B cell (primary cell): ENCODE measurements at regions of chr14 and their contacts with region 1.

Region 1: GRCh38 chr14:89720741-89721315 is 233.7 kb downstream of the EFCAB11 start:
- DNase-seq: peak; percentile 91
- ATAC-seq: peak; percentile 93
- H3K4me3 ChIP-seq: peak overlapping the region in 2 of 5 experiments; percentile 26 to 40
- H3K4me3 Mint-ChIP-seq: peak overlapping the region; percentile 75
- H3K27ac ChIP-seq: peak overlapping the region; percentile 93 to 95
- H3K27ac Mint-ChIP-seq: peak overlapping the region; percentile 95
- H3K4me1 ChIP-seq: peaks cover 59 to 62% of the 10 kb centered on the region in 2 donors
- H3K4me1 Mint-ChIP-seq: peaks cover 62% of the 10 kb centered on the region
- H3K27me3 ChIP-seq: no peaks in the 10 kb centered on the region
- H3K27me3 Mint-ChIP-seq: no peaks in the 10 kb centered on the region
- CTCF ChIP-seq: no peak

Region 2: DNA sequence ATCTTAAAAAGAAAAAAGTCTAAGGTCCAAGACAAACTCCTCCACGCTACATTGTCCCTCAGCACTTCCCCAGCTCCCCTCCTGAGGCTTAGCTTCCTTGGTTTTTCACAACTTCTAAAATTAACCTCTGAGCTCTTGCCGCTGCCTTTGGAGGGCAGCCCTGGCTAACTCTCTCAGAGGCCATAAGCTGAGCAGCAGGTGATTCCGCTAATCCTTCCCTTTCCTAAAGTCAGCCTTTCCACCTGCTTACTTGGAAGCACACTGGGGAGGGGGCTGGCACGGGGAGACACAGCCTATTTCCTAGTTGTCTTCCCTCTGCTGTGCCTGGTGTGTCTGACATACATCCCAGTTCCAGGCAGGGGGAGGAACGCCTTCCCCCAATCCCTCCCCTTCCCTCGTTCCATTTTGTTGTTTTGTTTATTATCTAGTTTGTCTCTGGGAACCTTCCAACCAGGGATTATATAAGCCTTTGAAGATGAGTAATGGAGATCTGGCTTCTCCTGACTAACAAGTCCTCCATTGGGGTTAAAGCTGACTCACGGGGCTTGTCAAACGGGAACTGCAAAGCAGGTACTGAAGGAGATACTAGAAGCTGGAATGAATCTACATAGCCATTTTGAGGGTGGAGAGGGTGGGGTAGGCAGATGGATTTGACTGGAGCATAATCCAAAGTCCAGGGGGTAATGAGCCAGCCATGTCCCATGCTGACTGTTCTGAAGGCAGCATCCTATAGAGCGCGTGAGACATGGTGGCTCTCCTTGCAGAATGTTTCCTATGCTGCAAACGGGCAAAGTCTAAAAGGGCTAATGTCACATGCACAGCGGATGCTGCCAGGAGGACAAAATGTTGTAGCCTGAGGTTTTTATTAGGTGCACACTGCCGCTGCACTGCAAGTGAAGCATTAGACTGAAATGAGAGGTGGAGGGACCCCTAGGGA is 534.6 kb before region 1 on chr14:
- CTCF ChIA-PET with region 1: no interaction called
- POLR2A ChIA-PET with region 1: no interaction called
- intact Hi-C with region 1: loop called (anchors 2 kb)
- DNase-seq: no peak
- ATAC-seq: no peak
- H3K4me3 ChIP-seq: peak overlapping the region in 1 of 5 experiments; percentile 11
- H3K4me3 Mint-ChIP-seq: peak overlapping the region; percentile 79
- H3K27ac ChIP-seq: peak overlapping the region in 1 of 2 donors; percentile 64
- H3K27ac Mint-ChIP-seq: peak overlapping the region; percentile 94
- H3K4me1 ChIP-seq: peaks cover 21 to 24% of the 10 kb centered on the region in 2 donors
- H3K4me1 Mint-ChIP-seq: peaks cover 41% of the 10 kb centered on the region
- H3K27me3 ChIP-seq: no peaks in the 10 kb centered on the region
- H3K27me3 Mint-ChIP-seq: no peaks in the 10 kb centered on the region
- CTCF ChIP-seq: no peak

Region 3: DNA sequence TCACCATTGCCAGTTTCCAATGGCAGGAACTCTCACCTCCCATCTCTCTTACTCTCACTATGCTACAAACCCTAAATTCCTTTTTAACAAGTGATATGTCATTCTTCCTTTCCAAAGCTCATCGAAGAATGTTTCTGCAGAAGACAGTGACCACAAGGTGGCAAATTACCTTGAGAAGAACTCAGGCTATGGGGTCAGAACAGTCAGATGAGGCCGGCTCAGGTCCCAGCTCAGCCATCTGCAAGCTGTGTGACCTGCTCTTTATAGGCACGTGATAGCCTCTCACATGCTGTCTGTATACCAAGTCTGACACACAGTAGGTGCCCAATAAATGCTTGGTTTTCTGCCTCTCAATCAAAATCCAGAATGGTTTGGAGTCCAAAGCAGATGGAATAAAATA is 384.5 kb before region 1 on chr14:
- CTCF ChIA-PET with region 1: interaction called, 5 read pairs
- POLR2A ChIA-PET with region 1: no interaction called
- intact Hi-C with region 1: loop called (anchors 1 kb)
- DNase-seq: peak; percentile 69
- ATAC-seq: peak; percentile 69
- H3K4me3 ChIP-seq: no peak overlapping the region
- H3K4me3 Mint-ChIP-seq: no peak overlapping the region
- H3K27ac ChIP-seq: peak overlapping the region in 1 of 2 donors; percentile 31
- H3K27ac Mint-ChIP-seq: peak overlapping the region; percentile 62
- H3K4me1 ChIP-seq: peaks cover 39 to 42% of the 10 kb centered on the region in 2 donors
- H3K4me1 Mint-ChIP-seq: peaks cover 67% of the 10 kb centered on the region
- H3K27me3 ChIP-seq: no peaks in the 10 kb centered on the region
- H3K27me3 Mint-ChIP-seq: no peaks in the 10 kb centered on the region
- CTCF ChIP-seq: peak; percentile 52

Region 4: GRCh38 chr14:89618811-89619551 is 101.8 kb before region 1 on chr14:
- CTCF ChIA-PET with region 1: interaction called, 5 read pairs
- POLR2A ChIA-PET with region 1: interaction called, 6 read pairs
- intact Hi-C with region 1: loop called (anchors 1 kb)
- DNase-seq: peak; percentile 81
- ATAC-seq: peak; percentile 72
- H3K4me3 ChIP-seq: peak overlapping the region; percentile 61 to 93 (median 86)
- H3K4me3 Mint-ChIP-seq: peak overlapping the region; percentile 92
- H3K27ac ChIP-seq: peak overlapping the region in 1 of 2 donors; percentile 71
- H3K27ac Mint-ChIP-seq: peak overlapping the region; percentile 86
- H3K4me1 ChIP-seq: peaks cover 51 to 55% of the 10 kb centered on the region in 2 donors
- H3K4me1 Mint-ChIP-seq: peaks cover 66% of the 10 kb centered on the region
- H3K27me3 ChIP-seq: no peaks in the 10 kb centered on the region
- H3K27me3 Mint-ChIP-seq: no peaks in the 10 kb centered on the region
- CTCF ChIP-seq: no peak

Region 5: DNA sequence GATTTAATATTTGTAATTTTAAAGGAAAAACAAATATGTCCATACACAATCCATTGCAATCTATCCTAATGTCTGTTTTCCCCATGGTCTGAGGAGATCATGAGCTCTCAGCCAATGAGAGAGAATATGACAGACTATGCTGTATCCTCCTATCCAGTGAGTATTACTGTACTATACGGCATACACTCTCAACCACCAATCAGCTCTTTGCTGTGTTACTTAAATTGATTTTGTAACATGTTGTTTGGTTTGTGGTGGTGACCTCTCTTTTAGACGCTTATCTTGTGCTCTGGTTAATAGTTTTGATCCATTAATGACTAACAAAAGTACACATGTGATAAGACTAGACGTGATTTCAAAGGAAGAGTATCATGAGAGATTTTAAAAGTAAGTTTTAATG is 72.3 kb before region 1 on chr14:
- CTCF ChIA-PET with region 1: no interaction called
- POLR2A ChIA-PET with region 1: no interaction called
- intact Hi-C with region 1: no loop called
- DNase-seq: no peak
- ATAC-seq: no peak
- H3K4me3 ChIP-seq: no peak overlapping the region
- H3K4me3 Mint-ChIP-seq: no peak overlapping the region
- H3K27ac ChIP-seq: no peak overlapping the region
- H3K27ac Mint-ChIP-seq: no peak overlapping the region
- H3K4me1 ChIP-seq: peaks cover 0 to 10% of the 10 kb centered on the region in 2 donors
- H3K4me1 Mint-ChIP-seq: peaks cover 18% of the 10 kb centered on the region
- H3K27me3 ChIP-seq: no peaks in the 10 kb centered on the region
- H3K27me3 Mint-ChIP-seq: no peaks in the 10 kb centered on the region
- CTCF ChIP-seq: no peak

Region 6: DNA sequence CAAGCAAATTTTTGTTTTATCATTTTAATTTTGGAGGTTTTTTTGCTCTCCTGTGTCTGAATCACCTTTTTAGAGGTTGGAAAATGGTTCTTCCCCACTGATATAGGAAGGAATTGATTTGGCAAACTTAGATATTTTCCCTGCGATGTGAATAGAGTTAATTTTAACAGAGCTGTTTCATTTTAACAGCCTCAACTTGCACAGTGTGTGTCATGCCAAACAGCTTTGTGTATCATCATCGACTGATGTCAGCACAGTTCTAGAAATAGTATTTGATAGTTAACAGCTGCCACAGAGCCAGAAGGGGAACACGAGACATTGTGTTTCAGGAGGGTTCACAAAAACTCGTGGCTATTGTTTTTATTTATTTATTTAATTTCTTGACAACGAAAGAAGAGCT is 60.7 kb before region 1 on chr14:
- CTCF ChIA-PET with region 1: no interaction called
- POLR2A ChIA-PET with region 1: no interaction called
- intact Hi-C with region 1: no loop called
- DNase-seq: no peak
- ATAC-seq: no peak
- H3K4me3 ChIP-seq: no peak overlapping the region
- H3K4me3 Mint-ChIP-seq: no peak overlapping the region
- H3K27ac ChIP-seq: no peak overlapping the region
- H3K27ac Mint-ChIP-seq: no peak overlapping the region
- H3K4me1 ChIP-seq: no peaks in the 10 kb centered on the region
- H3K4me1 Mint-ChIP-seq: peaks cover 4% of the 10 kb centered on the region
- H3K27me3 ChIP-seq: no peaks in the 10 kb centered on the region
- H3K27me3 Mint-ChIP-seq: no peaks in the 10 kb centered on the region
- CTCF ChIP-seq: no peak

Region 7: GRCh38 chr14:89681086-89682018 is 39.5 kb before region 1 on chr14:
- CTCF ChIA-PET with region 1: no interaction called
- POLR2A ChIA-PET with region 1: no interaction called
- intact Hi-C with region 1: loop called (anchors 5 kb)
- DNase-seq: peak; percentile 41
- ATAC-seq: peak; percentile 51
- H3K4me3 ChIP-seq: peak overlapping the region in 2 of 5 experiments; percentile 18 to 38
- H3K4me3 Mint-ChIP-seq: peak overlapping the region; percentile 62
- H3K27ac ChIP-seq: peak overlapping the region; percentile 45 to 72
- H3K27ac Mint-ChIP-seq: peak overlapping the region; percentile 74
- H3K4me1 ChIP-seq: peaks cover 28 to 30% of the 10 kb centered on the region in 2 donors
- H3K4me1 Mint-ChIP-seq: peaks cover 28% of the 10 kb centered on the region
- H3K27me3 ChIP-seq: no peaks in the 10 kb centered on the region
- H3K27me3 Mint-ChIP-seq: no peaks in the 10 kb centered on the region
- CTCF ChIP-seq: no peak

Region 8: DNA sequence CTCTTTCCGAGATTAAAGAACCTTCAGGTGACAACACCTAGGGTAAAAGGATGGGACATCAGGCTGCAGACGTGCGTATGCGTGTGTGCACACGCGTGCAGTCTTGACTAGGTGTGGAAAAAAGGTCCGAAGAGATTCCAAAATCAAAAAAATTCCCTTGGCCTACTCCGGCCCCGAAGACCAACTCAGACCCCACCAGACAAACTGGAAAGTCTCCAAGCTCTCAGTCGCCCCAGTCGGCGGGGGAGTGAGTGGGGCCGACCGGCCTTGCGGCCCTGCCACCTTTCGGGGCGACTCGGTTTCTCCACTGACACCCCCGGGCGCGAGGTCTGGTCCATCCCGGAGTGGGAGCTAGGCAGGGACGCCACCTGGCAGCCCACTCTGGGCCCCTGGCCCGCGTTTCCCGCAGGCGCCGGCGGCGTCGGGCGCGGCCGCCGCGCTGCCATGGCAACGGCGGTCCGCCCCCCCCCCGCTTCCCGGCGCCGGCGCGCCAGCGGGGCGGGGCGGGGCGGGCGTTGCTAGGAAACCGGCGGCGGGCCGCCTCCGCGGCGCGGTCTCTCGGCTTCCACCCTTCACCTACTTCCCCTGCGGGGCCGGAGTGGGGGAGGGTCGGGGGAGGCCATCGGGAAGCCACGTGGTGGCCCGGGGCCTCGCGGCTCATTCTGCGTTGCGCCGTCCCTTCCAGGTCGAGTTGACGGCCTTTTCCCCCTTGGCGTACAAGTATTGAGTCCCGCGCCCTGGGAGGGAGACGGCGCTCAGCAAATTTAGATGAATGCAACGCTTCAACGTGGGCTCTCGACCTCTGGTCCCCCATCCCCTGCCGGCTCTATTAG is 19.4 kb before region 1 on chr14:
- CTCF ChIA-PET with region 1: interaction called, 21 read pairs
- POLR2A ChIA-PET with region 1: interaction called, 8 read pairs
- intact Hi-C with region 1: loop called (anchors 1 kb)
- DNase-seq: peak; percentile 90
- ATAC-seq: peak; percentile 96
- H3K4me3 ChIP-seq: peak overlapping the region; percentile 4 to 80 (median 62)
- H3K4me3 Mint-ChIP-seq: peak overlapping the region; percentile 88
- H3K27ac ChIP-seq: peak overlapping the region; percentile 28 to 71
- H3K27ac Mint-ChIP-seq: peak overlapping the region; percentile 85
- H3K4me1 ChIP-seq: peaks cover 25% of the 10 kb centered on the region in 2 donors
- H3K4me1 Mint-ChIP-seq: peaks cover 25% of the 10 kb centered on the region
- H3K27me3 ChIP-seq: no peaks in the 10 kb centered on the region
- H3K27me3 Mint-ChIP-seq: no peaks in the 10 kb centered on the region
- CTCF ChIP-seq: no peak